ENCODE measurements at regions of chr6 and their contacts with region 1.

Region 1: DNA sequence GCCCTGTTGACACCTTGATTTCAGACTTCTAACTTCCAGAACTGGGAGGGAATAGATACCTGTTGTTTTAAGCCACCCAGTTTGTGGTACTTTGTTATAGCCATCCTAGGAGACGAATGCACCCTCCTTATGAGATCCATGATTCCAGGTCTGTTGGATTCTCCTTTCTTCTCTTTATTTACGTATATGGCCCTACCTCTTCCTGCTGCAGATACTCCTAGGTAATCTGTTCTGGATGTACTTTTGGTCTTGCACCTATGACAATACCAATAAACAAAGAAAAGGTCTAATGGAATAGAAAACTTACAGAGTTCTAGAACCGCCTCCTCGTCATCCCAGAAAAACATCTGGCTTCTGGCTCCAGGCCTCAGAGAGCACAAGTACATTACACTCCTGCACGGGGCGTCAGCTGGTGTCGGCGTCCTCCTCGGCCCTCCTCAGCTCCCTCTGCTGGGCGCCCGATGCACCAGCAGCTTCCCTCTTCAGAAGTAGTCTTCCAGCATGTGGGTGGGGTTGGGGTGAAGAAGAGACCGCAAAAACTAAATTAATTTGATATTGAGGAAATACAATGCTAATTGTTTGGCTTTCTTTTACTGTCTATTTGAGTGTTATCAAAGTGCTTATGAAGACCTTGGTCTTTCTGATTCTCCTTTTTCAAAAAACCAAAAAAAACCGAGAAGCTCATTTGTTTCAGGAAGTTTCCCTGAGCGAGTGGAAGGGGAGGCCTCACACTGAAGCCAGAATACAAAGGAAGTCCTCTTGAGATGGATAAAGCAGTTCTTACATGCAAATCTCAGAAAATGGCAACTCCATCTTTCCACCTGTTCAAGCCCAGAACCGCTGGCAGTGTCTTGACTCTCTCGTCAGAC is 9.7 kb upstream of the ATXN1 start:
- DNase-seq: peak; percentile 69 to 83 (median 75)
- H3K4me3 ChIP-seq: peak overlapping the region in 1 of 3 experiments; percentile 37
- H3K4me3 Mint-ChIP-seq: peak overlapping the region; percentile 66 to 86
- H3K27ac ChIP-seq: no peak overlapping the region
- H3K27ac Mint-ChIP-seq: peak overlapping the region; percentile 24 to 88 (median 62)
- H3K4me1 ChIP-seq: peaks cover 29 to 31% of the 10 kb centered on the region in 2 donors
- H3K4me1 Mint-ChIP-seq: peaks cover 44% of the 10 kb centered on the region
- H3K27me3 ChIP-seq: no peaks in the 10 kb centered on the region
- H3K27me3 Mint-ChIP-seq: peaks cover 0 to 2% (median 0%) of the 10 kb centered on the region in 3 donors
- CTCF ChIP-seq: peak; percentile 97

Region 2: DNA sequence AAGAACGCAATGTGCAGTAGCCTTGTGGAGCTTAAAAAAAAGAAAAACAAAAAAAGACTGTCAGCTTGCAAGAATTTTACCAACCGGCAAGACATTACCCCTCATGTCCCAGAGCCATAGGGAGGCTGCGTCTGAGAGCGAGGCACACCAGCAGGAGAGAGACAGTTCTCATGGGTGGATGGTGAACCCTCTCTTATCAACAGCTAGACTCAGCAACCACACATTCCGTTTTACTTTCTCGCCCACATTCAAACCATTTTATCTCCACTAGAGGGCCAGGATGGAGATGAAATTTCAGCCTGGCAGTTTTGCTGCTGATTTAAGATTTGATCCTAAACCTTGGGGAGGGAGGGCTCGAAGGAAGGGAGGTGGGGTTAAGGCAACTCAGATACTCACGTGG is 256.7 kb before region 1 on chr6:
- intact Hi-C with region 1: loop called (anchors 5 to 10 kb)
- DNase-seq: no peak
- H3K4me3 ChIP-seq: no peak overlapping the region
- H3K4me3 Mint-ChIP-seq: no peak overlapping the region
- H3K27ac ChIP-seq: no peak overlapping the region
- H3K27ac Mint-ChIP-seq: peak overlapping the region in 3 of 7 donors; percentile 33 to 62 (median 47)
- H3K4me1 ChIP-seq: peaks cover 36 to 41% of the 10 kb centered on the region in 2 donors
- H3K4me1 Mint-ChIP-seq: peaks cover 53% of the 10 kb centered on the region
- H3K27me3 ChIP-seq: no peaks in the 10 kb centered on the region
- H3K27me3 Mint-ChIP-seq: peaks cover 0 to 2% (median 2%) of the 10 kb centered on the region in 3 donors
- CTCF ChIP-seq: peak; percentile 54

Region 3: GRCh38 chr6:16752236-16752867 is 18.6 kb before region 1 on chr6:
- intact Hi-C with region 1: no loop called
- DNase-seq: peak; percentile 90 to 96 (median 95)
- H3K4me3 ChIP-seq: peak overlapping the region in 1 of 3 experiments; percentile 13
- H3K4me3 Mint-ChIP-seq: peak overlapping the region in 1 of 2 donors; percentile 51
- H3K27ac ChIP-seq: peak overlapping the region; percentile 67 to 81
- H3K27ac Mint-ChIP-seq: peak overlapping the region; percentile 86 to 94 (median 93)
- H3K4me1 ChIP-seq: peaks cover 39 to 74% of the 10 kb centered on the region in 2 donors
- H3K4me1 Mint-ChIP-seq: peaks cover 72% of the 10 kb centered on the region
- H3K27me3 ChIP-seq: no peaks in the 10 kb centered on the region
- H3K27me3 Mint-ChIP-seq: no peaks in the 10 kb centered on the region
- CTCF ChIP-seq: no peak

Region 4: DNA sequence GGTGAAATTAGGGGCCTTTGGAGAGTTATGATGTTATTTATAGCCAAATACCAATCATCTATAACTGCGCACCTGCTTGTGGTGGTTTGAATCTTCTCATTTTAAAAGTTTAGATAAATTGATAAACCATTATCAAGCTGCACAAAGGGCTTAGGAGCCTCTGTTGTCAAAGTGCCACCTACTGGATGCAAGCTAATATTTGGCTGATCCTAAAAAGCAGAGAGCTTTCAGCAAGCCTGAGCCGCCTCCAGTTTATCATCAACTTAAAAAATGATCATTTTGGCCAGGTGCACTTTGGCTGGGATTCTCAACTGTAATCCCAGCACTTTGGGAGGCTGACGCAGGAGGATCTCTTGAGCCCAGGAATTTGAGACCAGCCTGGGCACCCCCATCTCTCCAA is 48.8 kb after region 1 on chr6:
- intact Hi-C with region 1: no loop called
- DNase-seq: no peak
- H3K4me3 ChIP-seq: no peak overlapping the region
- H3K4me3 Mint-ChIP-seq: no peak overlapping the region
- H3K27ac ChIP-seq: no peak overlapping the region
- H3K27ac Mint-ChIP-seq: no peak overlapping the region
- H3K4me1 ChIP-seq: peaks cover 8 to 16% of the 10 kb centered on the region in 2 donors
- H3K4me1 Mint-ChIP-seq: peaks cover 7% of the 10 kb centered on the region
- H3K27me3 ChIP-seq: no peaks in the 10 kb centered on the region
- H3K27me3 Mint-ChIP-seq: peaks cover 7 to 9% (median 9%) of the 10 kb centered on the region in 3 donors
- CTCF ChIP-seq: no peak

Region 5: GRCh38 chr6:16901782-16902181 is 130.8 kb after region 1 on chr6:
- intact Hi-C with region 1: loop called in 1 of 2 experiments (anchors 10 kb)
- DNase-seq: peak; percentile 14 to 59 (median 32)
- H3K4me3 ChIP-seq: peak overlapping the region in 1 of 3 experiments; percentile 18
- H3K4me3 Mint-ChIP-seq: no peak overlapping the region
- H3K27ac ChIP-seq: peak overlapping the region in 1 of 2 donors; percentile 28
- H3K27ac Mint-ChIP-seq: peak overlapping the region in 4 of 7 donors; percentile 6 to 83 (median 43)
- H3K4me1 ChIP-seq: peaks cover 33 to 40% of the 10 kb centered on the region in 2 donors
- H3K4me1 Mint-ChIP-seq: peaks cover 35% of the 10 kb centered on the region
- H3K27me3 ChIP-seq: no peaks in the 10 kb centered on the region
- H3K27me3 Mint-ChIP-seq: peaks cover 0 to 5% (median under 1%) of the 10 kb centered on the region in 3 donors
- CTCF ChIP-seq: no peak

Region 6: GRCh38 chr6:16947375-16948015 is 176.6 kb after region 1 on chr6:
- intact Hi-C with region 1: no loop called
- DNase-seq: no peak
- H3K4me3 ChIP-seq: no peak overlapping the region
- H3K4me3 Mint-ChIP-seq: no peak overlapping the region
- H3K27ac ChIP-seq: no peak overlapping the region
- H3K27ac Mint-ChIP-seq: peak overlapping the region in 1 of 7 donors; percentile 43
- H3K4me1 ChIP-seq: no peaks in the 10 kb centered on the region
- H3K4me1 Mint-ChIP-seq: peaks cover 3% of the 10 kb centered on the region
- H3K27me3 ChIP-seq: peaks cover 0 to 2% of the 10 kb centered on the region in 2 donors
- H3K27me3 Mint-ChIP-seq: peaks cover 8 to 20% (median 8%) of the 10 kb centered on the region in 3 donors
- CTCF ChIP-seq: no peak

Region 7: DNA sequence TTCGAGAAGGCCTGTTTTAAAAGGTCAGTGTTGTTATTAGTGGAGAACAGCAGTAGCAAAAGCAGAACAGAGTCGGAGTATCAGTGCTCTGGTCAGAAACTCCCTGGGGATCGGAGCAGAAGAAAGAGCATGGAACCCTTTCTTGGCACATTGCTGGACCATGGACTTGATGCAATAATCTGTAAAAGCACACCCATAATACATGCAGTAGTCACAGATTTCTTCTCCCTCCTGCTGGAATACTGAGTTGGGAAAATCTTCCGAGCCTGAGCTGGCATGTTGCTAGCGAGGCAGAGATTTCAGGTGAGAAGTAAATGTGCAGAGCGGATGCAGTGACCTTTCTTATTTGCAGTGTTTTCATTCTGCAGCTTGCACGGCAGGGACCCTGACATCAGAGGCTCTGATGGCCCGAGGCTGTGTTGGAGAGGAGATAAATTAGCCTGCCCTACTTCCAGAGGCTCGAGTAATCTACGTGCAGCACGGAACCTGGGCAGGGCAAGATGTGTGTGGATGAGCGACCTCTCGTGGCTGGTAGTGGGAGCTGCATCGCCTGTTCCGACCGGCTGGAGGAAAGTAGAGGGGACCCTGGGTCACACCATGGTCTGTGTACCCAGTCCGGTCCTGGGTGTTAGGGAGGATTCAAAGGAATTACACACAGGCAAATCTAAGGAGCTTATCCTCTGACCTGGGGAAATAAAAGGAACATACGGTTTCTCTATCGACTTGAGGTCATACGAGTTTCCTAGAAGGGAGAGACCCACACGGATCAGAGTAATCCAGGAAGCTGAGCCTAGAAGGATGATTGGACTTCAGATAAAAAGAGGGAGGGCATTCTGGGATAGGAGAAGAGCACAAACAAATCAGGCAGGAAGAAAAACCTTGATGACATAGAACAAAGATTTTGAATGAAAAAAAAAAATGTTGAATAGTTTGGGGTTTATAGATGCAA is 193.9 kb after region 1 on chr6:
- intact Hi-C with region 1: loop called in 1 of 2 experiments (anchors 10 kb)
- DNase-seq: peak; percentile 44 to 64 (median 56)
- H3K4me3 ChIP-seq: peak overlapping the region in 1 of 3 experiments; percentile 5
- H3K4me3 Mint-ChIP-seq: peak overlapping the region in 1 of 2 donors; percentile 68
- H3K27ac ChIP-seq: no peak overlapping the region
- H3K27ac Mint-ChIP-seq: peak overlapping the region in 1 of 7 donors; percentile 50
- H3K4me1 ChIP-seq: peaks cover 3 to 4% of the 10 kb centered on the region in 2 donors
- H3K4me1 Mint-ChIP-seq: peaks cover 8% of the 10 kb centered on the region
- H3K27me3 ChIP-seq: no peaks in the 10 kb centered on the region
- H3K27me3 Mint-ChIP-seq: peaks cover 1 to 5% (median 2%) of the 10 kb centered on the region in 3 donors
- CTCF ChIP-seq: peak; percentile 94

Measured in CD14-positive monocyte (primary cell).